Activated CD4-positive, alpha-beta T cell treated with anti-CD3 and anti-CD28 coated beads, Interleukin-2, amount 10 ng/mL, durations not matched to agents 24 days and 14 days (primary cell): ENCODE measurements at regions of chr5 and their contacts with region 1.

Region 1: GRCh38 chr5:115169487-115170133 is at the start of gene TRIM36:
- DNase-seq: peak; percentile 98
- H3K4me3 Mint-ChIP-seq: peak within 1 kb of the TSS; percentile 86
- H3K27ac Mint-ChIP-seq: peak within 1 kb of the TSS; percentile 75
- H3K4me1 Mint-ChIP-seq: peaks cover 14% of the 10 kb centered on the region
- H3K27me3 Mint-ChIP-seq: peaks cover 63% of the 10 kb centered on the region
- total RNA-seq, gene TRIM36: 0.12 TPM in 1 of 2 replicates, not detected in the other

Region 2: GRCh38 chr5:115136294-115136693 is 33.3 kb before region 1 on chr5:
- intact Hi-C with region 1: no loop called
- DNase-seq: no peak
- H3K4me3 Mint-ChIP-seq: no peak overlapping the region
- H3K27ac Mint-ChIP-seq: no peak overlapping the region
- H3K4me1 Mint-ChIP-seq: no peaks in the 10 kb centered on the region
- H3K27me3 Mint-ChIP-seq: peaks cover 30% of the 10 kb centered on the region

Region 3: GRCh38 chr5:115180165-115180709 is 10.6 kb after region 1 on chr5:
- intact Hi-C with region 1: loop called (anchors 1 kb)
- DNase-seq: peak; percentile 80
- H3K4me3 Mint-ChIP-seq: peak overlapping the region; percentile 90
- H3K27ac Mint-ChIP-seq: no peak overlapping the region
- H3K4me1 Mint-ChIP-seq: peaks cover 7% of the 10 kb centered on the region
- H3K27me3 Mint-ChIP-seq: peaks cover 73% of the 10 kb centered on the region

Region 4: DNA sequence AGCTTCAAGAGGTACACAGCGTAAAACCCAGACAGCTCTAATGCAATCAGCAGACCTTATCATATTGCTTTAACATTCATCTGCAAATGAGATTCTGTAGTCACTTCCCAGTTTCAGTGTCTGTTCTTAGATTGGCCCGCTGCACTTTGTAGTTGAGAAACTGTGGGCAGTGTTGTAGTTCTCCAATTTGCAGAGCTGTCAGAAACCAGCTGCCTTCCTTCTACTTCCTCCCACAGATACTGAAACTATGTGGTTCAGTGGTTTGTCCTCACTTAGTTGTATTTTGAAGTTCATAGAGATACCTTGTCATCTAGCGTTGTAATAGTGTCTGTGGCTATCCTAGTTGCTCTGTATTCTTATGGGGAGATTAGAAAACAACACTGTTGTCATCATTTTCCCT is 39.7 kb after region 1 on chr5:
- intact Hi-C with region 1: loop called (anchors 2 kb)
- DNase-seq: peak; percentile 90
- H3K4me3 Mint-ChIP-seq: peak overlapping the region; percentile 24
- H3K27ac Mint-ChIP-seq: peak overlapping the region; percentile 68
- H3K4me1 Mint-ChIP-seq: peaks cover 19% of the 10 kb centered on the region
- H3K27me3 Mint-ChIP-seq: no peaks in the 10 kb centered on the region

Region 5: GRCh38 chr5:115246361-115246991 is 76.9 kb after region 1 on chr5:
- intact Hi-C with region 1: loop called (anchors 2 kb)
- DNase-seq: no peak
- H3K4me3 Mint-ChIP-seq: no peak overlapping the region
- H3K27ac Mint-ChIP-seq: no peak overlapping the region
- H3K4me1 Mint-ChIP-seq: peaks cover 12% of the 10 kb centered on the region
- H3K27me3 Mint-ChIP-seq: no peaks in the 10 kb centered on the region

Region 6: GRCh38 chr5:115262321-115263077 is 92.9 kb after region 1 on chr5 and contains the start of gene PGGT1B:
- intact Hi-C with region 1: loop called (anchors 2 kb)
- DNase-seq: peak; percentile 91
- H3K4me3 Mint-ChIP-seq: peak within 1 kb of the TSS; percentile 96
- H3K27ac Mint-ChIP-seq: peak within 1 kb of the TSS; percentile 88
- H3K4me1 Mint-ChIP-seq: peaks cover 36% of the 10 kb centered on the region
- H3K27me3 Mint-ChIP-seq: no peaks in the 10 kb centered on the region
- total RNA-seq, gene PGGT1B: 37.9 and 42.0 TPM in 2 replicates

Region 7: GRCh38 chr5:115296124-115297022 is 126.8 kb after region 1 on chr5 and contains the start of gene CCDC112:
- intact Hi-C with region 1: loop called (anchors 1 kb)
- DNase-seq: peak; percentile 87
- H3K4me3 Mint-ChIP-seq: peak within 1 kb of the TSS; percentile 85
- H3K27ac Mint-ChIP-seq: no peak within 1 kb of the TSS
- H3K4me1 Mint-ChIP-seq: peaks cover 4% of the 10 kb centered on the region
- H3K27me3 Mint-ChIP-seq: peaks cover 59% of the 10 kb centered on the region
- total RNA-seq, gene CCDC112: 0.31 and 0.49 TPM in 2 replicates

Region 8: GRCh38 chr5:115816226-115817081 is 646.8 kb after region 1 on chr5 and contains the start of gene CDO1:
- intact Hi-C with region 1: loop called (anchors 10 kb)
- DNase-seq: peak; percentile 77
- H3K4me3 Mint-ChIP-seq: peak within 1 kb of the TSS; percentile 78
- H3K27ac Mint-ChIP-seq: no peak within 1 kb of the TSS
- H3K4me1 Mint-ChIP-seq: peaks cover 22% of the 10 kb centered on the region
- H3K27me3 Mint-ChIP-seq: peaks cover 75% of the 10 kb centered on the region
- total RNA-seq, gene CDO1: 0.45 and 0.82 TPM in 2 replicates